PC-9 (cell line): ENCODE measurements at regions of chr22 and their contacts with region 1.

Region 1: DNA sequence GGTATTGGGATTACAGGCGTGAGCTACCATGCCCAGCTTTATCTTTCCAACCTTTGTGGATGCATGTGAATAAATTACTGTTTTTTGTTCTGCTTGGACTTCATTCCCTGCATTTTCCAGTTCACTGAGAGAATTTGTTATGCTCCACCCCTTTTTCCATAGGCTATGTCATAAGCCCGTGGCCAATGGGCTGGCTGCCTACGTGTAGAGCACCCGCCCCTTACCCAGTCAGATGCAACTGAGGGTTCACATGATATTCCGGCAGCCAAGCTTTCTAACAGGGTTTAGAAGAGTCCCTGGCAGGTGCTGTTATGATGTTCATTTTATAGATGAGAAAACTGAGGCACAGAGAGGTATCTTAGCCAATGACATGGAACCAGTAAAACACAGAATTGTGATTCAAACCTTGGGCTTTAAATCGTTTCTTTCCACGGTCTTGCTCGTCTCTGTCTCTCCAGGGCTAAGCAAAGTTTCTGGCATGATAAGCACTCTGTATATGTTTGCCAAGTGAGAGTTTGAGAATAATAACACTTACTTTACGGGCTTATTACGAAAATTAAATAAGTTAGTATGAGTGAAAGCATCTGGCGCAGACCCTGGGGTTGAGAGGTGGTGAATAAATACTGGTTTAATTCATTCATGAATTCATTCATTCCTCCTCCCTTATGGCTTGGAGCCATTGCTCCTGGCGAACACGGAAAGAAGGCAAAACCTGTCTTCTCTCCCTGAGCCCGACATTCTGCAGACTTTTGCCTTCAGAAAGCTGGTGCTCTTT is 42.4 kb upstream of the RASD2 start:
- DNase-seq: no peak
- H3K4me3 ChIP-seq: no peak overlapping the region
- H3K27ac ChIP-seq: no peak overlapping the region
- H3K4me1 ChIP-seq: no peaks in the 10 kb centered on the region
- H3K27me3 ChIP-seq: peaks cover 14% of the 10 kb centered on the region
- CTCF ChIP-seq: no peak

Region 2: DNA sequence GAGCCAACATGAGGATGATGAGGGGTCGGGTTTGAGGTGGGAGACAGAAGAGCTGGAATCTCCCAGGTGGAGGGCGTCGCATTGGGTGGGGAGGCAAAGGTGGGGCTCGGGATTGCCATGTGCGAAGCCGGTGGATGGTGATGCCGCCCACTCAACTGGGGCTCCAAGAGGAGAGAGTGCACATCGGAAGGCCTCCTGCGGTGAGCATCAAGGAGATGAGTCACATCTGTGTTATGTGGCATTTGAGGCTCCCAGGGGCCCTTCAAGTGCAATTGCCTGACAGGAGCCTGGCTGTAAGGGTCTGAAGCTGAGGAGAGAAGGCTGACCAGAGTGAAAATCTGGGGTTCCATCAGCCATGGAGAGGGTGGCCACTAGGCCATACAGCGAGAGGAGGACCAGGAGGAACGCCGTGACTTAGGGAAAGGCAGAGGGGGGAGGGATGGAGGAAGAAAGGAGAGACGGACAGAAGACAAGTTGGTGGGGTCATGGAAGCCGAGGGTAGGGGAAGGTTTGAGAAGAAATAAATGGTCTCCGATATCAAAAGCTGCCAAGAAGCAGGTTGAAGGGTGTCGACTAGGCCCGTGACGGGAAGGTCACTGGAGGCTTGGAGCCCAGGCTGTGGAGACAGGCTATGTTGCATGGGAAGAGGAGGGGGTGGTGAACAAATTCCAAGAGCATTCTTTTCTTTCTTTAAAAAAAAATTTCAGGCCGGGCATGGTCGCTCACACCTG is 63.7 kb after region 1 on chr22:
- CTCF ChIA-PET with region 1: no interaction called
- POLR2A ChIA-PET with region 1: no interaction called
- intact Hi-C with region 1: loop called (anchors 10 kb)
- DNase-seq: peak; percentile 55 to 67
- H3K4me3 ChIP-seq: no peak overlapping the region
- H3K27ac ChIP-seq: no peak overlapping the region
- H3K4me1 ChIP-seq: peaks cover 14% of the 10 kb centered on the region
- H3K27me3 ChIP-seq: no peaks in the 10 kb centered on the region
- CTCF ChIP-seq: no peak